Panc1 (cell line): ENCODE measurements at regions of chr12 and their contacts with region 1.

Region 1: DNA sequence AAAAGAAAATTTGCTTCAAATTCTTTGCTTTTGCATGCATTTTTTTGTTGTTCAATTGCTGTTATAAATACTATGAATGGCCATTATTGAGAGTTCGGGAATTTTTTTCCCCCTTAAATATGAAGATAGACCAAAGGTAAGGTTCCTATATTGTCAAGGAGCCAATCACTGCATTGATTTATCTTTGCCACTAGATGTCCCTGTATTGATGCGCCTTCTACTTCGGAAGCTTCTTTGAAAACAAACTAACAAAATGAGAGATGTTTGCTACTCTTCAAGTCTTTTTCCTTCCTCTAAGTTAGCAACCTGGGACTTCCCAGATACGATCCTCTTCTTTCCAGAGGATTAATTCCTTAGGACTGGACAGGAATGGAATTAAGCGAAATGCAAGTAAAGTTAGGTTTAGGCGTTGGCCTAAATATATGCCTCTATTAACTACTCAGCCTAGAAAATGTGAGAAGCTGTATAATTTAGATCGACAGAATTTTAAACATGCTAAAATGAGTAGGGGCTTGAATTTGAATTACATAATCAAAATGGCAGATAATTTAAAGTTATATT is 318.1 kb downstream of the AEBP2 start:
- DNase-seq: no peak
- ATAC-seq: no peak
- H3K4me3 ChIP-seq: no peak overlapping the region
- H3K27ac ChIP-seq: no peak overlapping the region
- H3K4me1 ChIP-seq: no peaks in the 10 kb centered on the region
- H3K27me3 ChIP-seq: no peaks in the 10 kb centered on the region
- CTCF ChIP-seq: peak; percentile 56; the same call in 1 of the 2 replicates

Region 2: DNA sequence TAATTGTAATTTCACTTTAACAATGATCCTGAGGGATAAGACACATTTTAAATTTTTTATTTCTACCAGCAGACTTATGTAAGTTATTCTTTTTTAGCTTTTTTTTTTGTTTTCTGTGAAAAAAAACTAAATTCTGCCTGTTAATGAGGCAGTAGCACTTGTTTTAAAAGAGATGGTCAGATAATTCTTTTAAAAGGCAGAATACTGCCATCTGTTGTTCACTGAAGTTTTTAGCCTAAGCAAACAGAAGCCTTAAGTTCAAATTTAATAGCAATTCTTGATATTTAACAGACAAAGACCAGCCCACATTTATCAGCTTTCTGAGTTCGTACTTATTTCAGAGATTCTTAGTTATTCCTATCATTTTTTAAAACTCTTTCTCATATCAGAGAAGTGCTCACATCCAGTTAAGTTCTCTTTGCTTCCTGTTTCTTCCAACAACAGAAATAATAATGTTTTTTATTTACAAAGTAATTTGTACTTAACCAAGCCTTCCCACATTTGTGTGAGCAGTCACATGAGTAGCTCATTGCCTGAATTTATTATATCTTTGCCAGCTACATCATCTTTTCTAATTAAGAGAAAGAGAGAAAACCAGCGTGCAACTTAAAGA is 844.4 kb after region 1 on chr12:
- CTCF ChIA-PET with region 1: no interaction called
- POLR2A ChIA-PET with region 1: no interaction called
- in situ Hi-C with region 1: no loop called
- intact Hi-C with region 1: loop called (anchors 10 kb)
- DNase-seq: no peak
- ATAC-seq: no peak
- H3K4me3 ChIP-seq: no peak overlapping the region
- H3K27ac ChIP-seq: no peak overlapping the region
- H3K4me1 ChIP-seq: no peaks in the 10 kb centered on the region
- H3K27me3 ChIP-seq: no peaks in the 10 kb centered on the region
- CTCF ChIP-seq: peak; percentile 30; the same call in 1 of the 2 replicates